ENCODE measurements at regions of chr11 and their contacts with region 1.

Region 1: DNA sequence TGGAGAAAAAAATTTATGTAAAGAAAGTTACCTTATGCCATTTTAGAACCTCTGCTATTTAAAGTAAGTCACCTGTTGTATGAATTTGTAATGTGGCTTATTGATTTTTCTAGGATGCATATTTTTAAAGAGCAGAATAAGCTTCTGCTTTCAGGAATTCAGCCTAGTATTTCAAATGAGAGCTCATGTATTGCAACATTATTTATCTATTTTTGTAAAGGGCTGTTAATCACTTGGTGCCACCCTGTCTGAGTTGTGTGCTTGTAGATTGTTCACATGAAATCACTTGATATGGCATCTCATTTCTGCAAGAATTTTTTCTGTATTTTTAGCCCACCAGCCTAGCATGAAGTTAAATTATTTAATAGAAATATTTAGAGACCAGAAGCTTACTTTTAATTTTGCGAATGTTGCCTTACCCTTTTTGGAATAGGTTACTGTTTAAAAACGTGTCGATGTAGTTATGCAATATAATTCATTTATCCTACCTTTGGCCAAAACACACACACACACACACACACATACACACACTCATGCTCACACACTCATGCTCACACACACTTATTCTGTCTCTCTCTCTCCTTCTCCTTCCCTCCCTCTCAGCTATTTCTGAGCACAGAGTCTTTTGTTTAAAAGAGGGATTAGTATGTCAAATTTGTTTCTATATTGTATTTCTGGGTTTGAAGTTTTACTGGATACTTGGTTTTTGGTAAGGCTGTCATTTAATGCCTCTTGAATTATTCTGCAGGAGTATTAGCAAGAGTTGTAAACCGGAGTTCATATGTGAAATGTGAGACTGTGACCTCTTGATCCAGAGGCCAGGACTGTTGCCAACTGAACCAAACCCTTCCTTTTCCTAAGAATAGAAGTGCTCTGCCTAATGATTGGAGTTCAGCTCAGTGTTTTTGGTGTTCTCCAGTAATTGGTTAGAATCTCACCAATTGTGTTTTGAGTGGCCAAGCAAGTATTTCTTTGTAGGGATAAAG is 34.4 kb downstream of the YAP1 start:
- DNase-seq: peak; percentile 69
- H3K4me3 Mint-ChIP-seq: peak overlapping the region; percentile 3
- H3K27ac Mint-ChIP-seq: peak overlapping the region; percentile 37
- H3K4me1 Mint-ChIP-seq: peaks cover 47% of the 10 kb centered on the region
- H3K27me3 Mint-ChIP-seq: no peaks in the 10 kb centered on the region
- CTCF ChIP-seq: no peak

Region 2: DNA sequence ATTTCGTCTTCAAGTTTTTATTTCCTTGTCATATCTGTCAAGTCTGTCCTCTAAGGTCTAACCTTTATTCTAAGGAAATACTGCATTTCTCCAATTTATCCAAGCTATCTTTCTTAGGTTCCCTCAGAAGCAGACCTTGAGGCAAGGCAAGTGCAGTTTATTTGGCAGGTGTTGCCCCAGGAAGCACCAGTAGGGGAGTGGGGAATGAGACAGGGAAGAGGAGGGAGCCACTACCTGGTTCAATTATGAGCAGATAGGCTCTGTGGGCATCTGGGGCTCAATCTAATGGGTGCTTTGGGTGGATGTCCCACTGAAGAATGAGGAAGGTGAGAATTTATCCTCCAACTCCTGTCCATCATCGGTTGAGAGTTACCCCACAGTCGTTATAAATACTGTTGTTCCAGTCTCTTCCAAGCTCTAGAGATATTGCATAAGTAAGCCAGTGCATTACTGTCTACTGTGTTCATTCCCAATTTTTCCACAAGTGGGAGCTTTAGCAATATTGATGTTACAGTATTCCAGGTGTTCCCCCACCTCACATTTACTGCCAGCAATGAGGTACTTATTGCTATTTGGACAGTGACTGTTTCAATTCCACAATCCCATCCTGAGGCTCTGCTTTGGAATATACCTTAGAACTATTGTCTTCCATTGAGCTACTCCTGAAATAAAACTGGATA is 384.7 kb before region 1 on chr11:
- CTCF ChIA-PET with region 1: no interaction called
- POLR2A ChIA-PET with region 1: no interaction called
- intact Hi-C with region 1: no loop called
- DNase-seq: peak; percentile 49
- H3K4me3 Mint-ChIP-seq: no peak overlapping the region
- H3K27ac Mint-ChIP-seq: peak overlapping the region; percentile 39
- H3K4me1 Mint-ChIP-seq: peaks cover 15% of the 10 kb centered on the region
- H3K27me3 Mint-ChIP-seq: no peaks in the 10 kb centered on the region
- CTCF ChIP-seq: peak; percentile 10

Region 3: DNA sequence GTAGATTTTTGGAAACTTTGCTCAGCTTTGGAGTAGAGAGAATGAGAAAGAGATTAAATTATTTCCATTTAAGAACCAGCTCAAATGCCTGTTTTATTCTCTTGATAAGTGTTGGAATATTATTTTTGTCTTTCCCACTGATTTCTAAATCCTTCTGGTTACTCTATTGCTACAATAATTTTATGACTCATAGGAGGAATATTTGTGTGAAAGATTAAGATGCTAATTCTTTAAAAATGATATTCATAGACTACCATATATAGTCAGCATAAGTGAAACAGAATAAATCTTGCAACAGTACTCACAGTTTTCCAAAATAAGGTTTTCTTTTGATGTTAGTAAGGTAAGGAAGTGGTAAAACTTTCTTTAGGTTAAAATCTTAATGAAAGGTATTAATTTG is 26.5 kb after region 1 on chr11:
- CTCF ChIA-PET with region 1: interaction called, 3 read pairs
- POLR2A ChIA-PET with region 1: interaction called, 9 read pairs
- intact Hi-C with region 1: loop called (anchors 2 kb)
- DNase-seq: peak; percentile 64
- H3K4me3 Mint-ChIP-seq: no peak overlapping the region
- H3K27ac Mint-ChIP-seq: peak overlapping the region; percentile 76
- H3K4me1 Mint-ChIP-seq: peaks cover 34% of the 10 kb centered on the region
- H3K27me3 Mint-ChIP-seq: no peaks in the 10 kb centered on the region
- CTCF ChIP-seq: no peak

Region 4: DNA sequence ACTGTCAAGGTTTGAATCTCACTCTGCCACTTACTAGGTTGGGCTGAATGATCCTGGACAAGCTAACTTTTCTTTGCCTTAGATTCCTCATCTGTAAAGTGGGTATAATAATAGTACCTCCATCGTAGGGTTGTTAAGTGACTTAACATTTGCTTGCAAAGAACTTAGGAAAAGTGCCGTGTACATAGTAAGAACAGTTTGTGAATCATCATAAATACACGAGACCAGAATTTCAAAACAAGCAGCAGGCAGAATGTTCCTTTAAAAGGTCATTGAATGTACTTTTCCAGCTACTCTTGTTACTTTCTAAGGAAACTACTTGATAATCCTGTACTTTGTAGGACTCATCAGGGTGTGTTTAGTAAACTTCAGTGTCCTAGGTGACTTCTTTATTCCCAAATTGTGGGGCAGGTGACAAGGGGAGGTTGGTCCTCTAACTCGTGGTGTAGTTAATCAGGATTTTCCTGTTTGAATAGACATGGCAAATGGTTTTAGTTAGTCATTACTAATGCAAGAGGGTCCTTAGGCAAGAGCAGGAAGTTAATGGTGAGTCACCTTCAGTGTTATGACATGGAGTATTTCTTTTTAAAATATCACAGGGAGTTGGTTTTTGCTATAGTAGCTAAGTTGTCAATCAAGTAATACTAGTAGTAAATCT is 33.5 kb after region 1 on chr11:
- CTCF ChIA-PET with region 1: no interaction called
- POLR2A ChIA-PET with region 1: interaction called, 13 read pairs
- intact Hi-C with region 1: no loop called
- DNase-seq: peak; percentile 92
- H3K4me3 Mint-ChIP-seq: peak overlapping the region; percentile 49
- H3K27ac Mint-ChIP-seq: peak overlapping the region; percentile 17
- H3K4me1 Mint-ChIP-seq: peaks cover 38% of the 10 kb centered on the region
- H3K27me3 Mint-ChIP-seq: no peaks in the 10 kb centered on the region
- CTCF ChIP-seq: no peak

Region 5: DNA sequence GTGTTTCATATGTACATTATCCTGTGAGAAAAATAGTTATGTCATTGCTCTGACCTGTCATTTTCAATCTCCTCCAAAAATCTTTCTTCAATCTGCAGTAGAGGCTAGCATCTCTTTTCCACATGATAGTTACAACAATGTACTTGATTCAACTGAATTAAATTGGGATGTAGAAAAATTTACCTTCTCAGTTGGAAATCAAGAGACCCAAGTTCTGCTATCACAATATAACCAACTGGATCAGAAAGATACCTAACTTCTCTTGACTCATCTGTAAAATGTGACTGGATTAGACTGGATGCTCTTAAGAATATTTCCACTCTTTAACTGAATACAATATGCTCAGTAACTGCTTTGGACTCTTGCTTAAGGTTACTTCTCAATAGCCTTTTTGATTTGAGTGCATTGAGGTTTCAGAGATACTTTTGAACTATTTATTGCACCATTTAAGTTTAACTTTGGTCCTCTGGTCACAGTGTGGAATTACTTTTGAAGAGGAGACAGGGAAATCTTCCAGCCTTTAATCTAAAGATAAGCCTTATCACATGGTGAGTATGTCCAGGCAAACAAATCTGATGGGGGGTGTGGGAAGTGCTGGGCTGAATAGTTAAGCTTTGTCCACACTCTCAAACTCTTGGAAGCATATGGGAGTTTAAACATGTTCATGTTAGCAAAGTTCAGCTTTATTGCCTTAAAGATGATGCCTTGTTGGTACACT is 47.9 kb after region 1 on chr11:
- CTCF ChIA-PET with region 1: no interaction called
- POLR2A ChIA-PET with region 1: no interaction called
- intact Hi-C with region 1: no loop called
- DNase-seq: no peak
- H3K4me3 Mint-ChIP-seq: no peak overlapping the region
- H3K27ac Mint-ChIP-seq: peak overlapping the region; percentile 1
- H3K4me1 Mint-ChIP-seq: peaks cover 11% of the 10 kb centered on the region
- H3K27me3 Mint-ChIP-seq: no peaks in the 10 kb centered on the region
- CTCF ChIP-seq: no peak

Region 6: GRCh38 chr11:102204174-102204573 is 59.5 kb after region 1 on chr11:
- CTCF ChIA-PET with region 1: no interaction called
- POLR2A ChIA-PET with region 1: no interaction called
- intact Hi-C with region 1: no loop called
- DNase-seq: no peak
- H3K4me3 Mint-ChIP-seq: no peak overlapping the region
- H3K27ac Mint-ChIP-seq: peak overlapping the region; percentile 63
- H3K4me1 Mint-ChIP-seq: peaks cover 25% of the 10 kb centered on the region
- H3K27me3 Mint-ChIP-seq: no peaks in the 10 kb centered on the region
- CTCF ChIP-seq: no peak